Activated CD8-positive, alpha-beta T cell treated with anti-CD3 and anti-CD28 coated beads for 36 hours (primary cell): ENCODE measurements at regions of chr11 and their contacts with region 1.

Region 1: GRCh38 chr11:10413268-10413667 is 41.8 kb upstream of the AMPD3 start:
- DNase-seq: peak; percentile 72
- ATAC-seq: peak; percentile 93
- H3K4me3 Mint-ChIP-seq: no peak overlapping the region
- H3K27ac Mint-ChIP-seq: no peak overlapping the region
- H3K4me1 Mint-ChIP-seq: peaks cover 28% of the 10 kb centered on the region
- H3K27me3 Mint-ChIP-seq: no peaks in the 10 kb centered on the region
- CTCF ChIP-seq: peak; percentile 58

Region 2: GRCh38 chr11:10155793-10156490 is 257.3 kb before region 1 on chr11:
- CTCF ChIA-PET with region 1: no interaction called
- POLR2A ChIA-PET with region 1: no interaction called
- intact Hi-C with region 1: no loop called
- DNase-seq: no peak
- ATAC-seq: no peak
- H3K4me3 Mint-ChIP-seq: no peak overlapping the region
- H3K27ac Mint-ChIP-seq: no peak overlapping the region
- H3K4me1 Mint-ChIP-seq: peaks cover 3% of the 10 kb centered on the region
- H3K27me3 Mint-ChIP-seq: no peaks in the 10 kb centered on the region
- CTCF ChIP-seq: no peak

Region 3: GRCh38 chr11:10366568-10367370 is 46.5 kb before region 1 on chr11:
- CTCF ChIA-PET with region 1: interaction called, 11 read pairs
- POLR2A ChIA-PET with region 1: no interaction called
- intact Hi-C with region 1: no loop called
- DNase-seq: peak; percentile 88
- ATAC-seq: peak; percentile 96
- H3K4me3 Mint-ChIP-seq: no peak overlapping the region
- H3K27ac Mint-ChIP-seq: peak overlapping the region; percentile 39
- H3K4me1 Mint-ChIP-seq: peaks cover 5% of the 10 kb centered on the region
- H3K27me3 Mint-ChIP-seq: peaks cover 10% of the 10 kb centered on the region
- CTCF ChIP-seq: peak; percentile 90

Region 4: DNA sequence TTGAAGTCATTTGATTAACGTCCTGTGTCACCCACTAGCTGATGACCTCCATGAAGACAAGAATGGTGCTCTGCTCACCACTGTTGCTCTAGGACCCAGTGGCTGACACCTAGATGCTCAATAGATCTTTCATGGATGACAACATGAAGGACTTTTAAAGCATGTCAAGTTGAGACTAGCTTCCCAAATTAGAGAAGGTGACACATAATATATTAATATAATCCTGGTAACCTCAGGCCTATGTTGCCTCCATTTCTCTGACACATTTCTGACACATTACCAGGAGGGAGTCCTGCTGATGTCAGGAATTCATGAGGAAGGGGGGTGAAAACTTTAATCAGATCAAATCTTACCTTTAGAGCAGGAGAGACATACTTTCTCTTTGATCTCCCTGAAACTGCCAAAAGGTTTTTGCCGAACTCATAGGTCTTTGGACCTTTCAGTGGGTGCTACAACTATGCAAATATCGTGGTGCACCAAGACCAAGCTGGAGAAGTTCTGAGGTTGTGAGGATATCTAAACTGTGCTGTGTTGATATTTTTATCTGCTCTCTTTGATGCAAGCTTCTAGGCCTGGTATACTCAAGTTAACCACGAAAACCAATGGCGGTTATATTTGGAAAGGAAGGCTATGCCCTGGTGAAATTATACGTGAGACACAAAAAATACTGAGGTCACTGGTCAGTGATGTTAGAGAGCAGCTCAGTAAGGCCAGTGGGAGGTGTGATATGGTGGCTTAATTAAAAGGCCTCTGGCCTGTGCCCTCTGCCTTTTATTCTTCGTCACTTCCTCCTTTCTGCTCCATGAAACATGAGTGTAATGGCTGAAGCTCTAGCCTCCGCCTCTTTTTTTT is 28.6 kb after region 1 on chr11:
- CTCF ChIA-PET with region 1: interaction called, 18 read pairs
- POLR2A ChIA-PET with region 1: no interaction called
- intact Hi-C with region 1: no loop called
- DNase-seq: peak; percentile 66
- ATAC-seq: peak; percentile 75
- H3K4me3 Mint-ChIP-seq: no peak overlapping the region
- H3K27ac Mint-ChIP-seq: peak overlapping the region; percentile 47
- H3K4me1 Mint-ChIP-seq: peaks cover 45% of the 10 kb centered on the region
- H3K27me3 Mint-ChIP-seq: no peaks in the 10 kb centered on the region
- CTCF ChIP-seq: no peak

Region 5: GRCh38 chr11:10455637-10456487 is 42.6 kb after region 1 on chr11:
- CTCF ChIA-PET with region 1: interaction called, 26 read pairs
- POLR2A ChIA-PET with region 1: interaction called, 4 read pairs
- intact Hi-C with region 1: no loop called
- DNase-seq: peak; percentile 89
- ATAC-seq: peak; percentile 70
- H3K4me3 Mint-ChIP-seq: peak overlapping the region; percentile 91
- H3K27ac Mint-ChIP-seq: peak overlapping the region; percentile 97
- H3K4me1 Mint-ChIP-seq: peaks cover 81% of the 10 kb centered on the region
- H3K27me3 Mint-ChIP-seq: no peaks in the 10 kb centered on the region
- CTCF ChIP-seq: no peak

Region 6: DNA sequence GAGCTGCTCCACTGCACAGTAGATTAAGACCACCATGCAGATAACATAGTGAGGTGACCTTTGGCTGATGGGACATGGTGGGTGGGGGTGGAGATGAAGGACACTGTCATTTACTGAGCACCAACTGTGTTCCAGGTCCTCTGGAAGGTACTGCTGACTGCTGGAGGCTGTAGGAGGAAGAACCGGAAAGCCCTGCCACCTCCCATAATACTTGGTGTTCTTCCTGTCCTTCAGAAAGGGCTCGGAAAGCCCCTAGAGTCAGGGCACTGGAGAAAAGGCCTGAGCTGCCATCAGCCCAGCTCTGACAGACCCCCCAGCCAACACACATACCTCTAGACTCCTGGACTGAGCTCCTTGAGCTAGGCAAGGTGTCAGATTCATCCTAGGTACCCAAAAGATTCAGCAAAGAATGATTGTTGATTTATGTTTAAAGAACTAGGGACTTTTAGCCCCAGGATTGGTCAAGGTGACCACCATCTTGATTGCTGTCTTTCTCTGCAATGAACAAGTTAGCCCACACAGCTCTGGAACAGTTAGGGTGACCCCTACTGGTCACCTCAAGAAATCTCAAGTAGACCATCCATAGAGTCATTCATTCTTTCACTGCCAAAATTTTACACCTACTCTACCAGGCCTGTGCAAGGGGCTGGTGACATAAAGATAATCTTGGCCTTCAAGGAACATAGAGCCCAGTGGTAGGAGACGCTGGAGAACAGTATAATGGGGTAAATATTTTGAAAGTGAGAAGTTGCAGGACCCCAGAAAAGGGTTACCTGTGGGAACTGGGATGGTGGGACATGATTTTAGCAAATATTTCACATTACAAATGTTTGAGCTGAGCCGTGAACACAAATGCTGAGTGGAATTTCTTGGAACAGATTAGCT is 240.9 kb after region 1 on chr11:
- CTCF ChIA-PET with region 1: interaction called, 65 read pairs
- POLR2A ChIA-PET with region 1: no interaction called
- intact Hi-C with region 1: loop called (anchors 1 kb)
- DNase-seq: peak; percentile 46
- ATAC-seq: peak; percentile 64
- H3K4me3 Mint-ChIP-seq: no peak overlapping the region
- H3K27ac Mint-ChIP-seq: no peak overlapping the region
- H3K4me1 Mint-ChIP-seq: peaks cover 21% of the 10 kb centered on the region
- H3K27me3 Mint-ChIP-seq: no peaks in the 10 kb centered on the region
- CTCF ChIP-seq: peak; percentile 79